GM12878 (cell line): ENCODE measurements at regions of chr12 and their contacts with region 1.

Region 1: DNA sequence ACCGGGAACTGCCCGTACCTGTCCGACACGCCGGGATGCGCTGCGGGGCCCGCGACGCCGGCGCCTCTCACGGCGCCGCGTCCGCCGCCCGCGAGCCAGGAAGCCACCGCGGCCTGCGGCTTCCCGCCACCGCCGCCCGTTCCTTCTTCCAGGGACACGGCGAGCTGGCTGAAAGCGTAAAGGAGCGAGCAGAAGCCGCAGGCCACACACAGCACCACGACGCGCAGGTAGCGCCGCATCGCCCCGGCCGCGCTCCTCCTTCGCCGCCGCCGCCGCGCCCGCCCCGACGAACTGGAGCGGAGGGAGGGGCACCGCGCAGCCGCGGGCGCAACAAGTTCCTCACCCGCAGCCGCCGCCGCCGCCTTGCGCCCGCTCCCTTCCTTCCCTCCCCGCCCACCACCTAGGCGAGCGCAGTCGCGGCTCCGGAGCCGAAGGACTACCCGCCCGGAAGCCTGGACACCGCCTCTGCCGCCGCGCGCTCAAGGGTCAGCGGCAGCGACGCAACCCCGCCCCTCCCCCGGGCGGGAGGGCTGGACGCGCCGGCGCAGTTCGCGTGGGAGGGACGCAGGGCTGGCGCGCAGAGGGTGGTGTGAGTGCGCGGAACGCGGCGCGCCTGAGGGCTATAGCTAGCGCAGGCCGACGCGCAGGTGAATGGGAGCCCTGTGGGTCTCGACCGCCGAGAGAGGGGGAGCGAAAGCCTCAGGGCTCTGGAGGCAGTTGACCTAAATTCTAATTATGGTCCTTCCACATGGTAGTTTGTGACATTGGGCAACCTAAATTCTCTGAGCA is at the start of gene GXYLT1:
- DNase-seq: peak; percentile 79
- ATAC-seq: peak; percentile 94
- H3K4me3 ChIP-seq: peak within 1 kb of the TSS; percentile 82
- H3K27ac ChIP-seq: peak within 1 kb of the TSS; percentile 61
- H3K4me1 ChIP-seq: peaks cover 5% of the 10 kb centered on the region; the same call in 1 of the 2 replicates
- H3K27me3 ChIP-seq: no peaks in the 10 kb centered on the region
- CTCF ChIP-seq: no peak
- EP300 ChIP-seq: no peak; a peak in 1 of 4 replicates
- POLR2A ChIP-seq: peak; percentile 86
- RAD21 ChIP-seq: no peak
- polyA plus RNA-seq, gene GXYLT1: 2.3 to 2.4 TPM

Region 2: DNA sequence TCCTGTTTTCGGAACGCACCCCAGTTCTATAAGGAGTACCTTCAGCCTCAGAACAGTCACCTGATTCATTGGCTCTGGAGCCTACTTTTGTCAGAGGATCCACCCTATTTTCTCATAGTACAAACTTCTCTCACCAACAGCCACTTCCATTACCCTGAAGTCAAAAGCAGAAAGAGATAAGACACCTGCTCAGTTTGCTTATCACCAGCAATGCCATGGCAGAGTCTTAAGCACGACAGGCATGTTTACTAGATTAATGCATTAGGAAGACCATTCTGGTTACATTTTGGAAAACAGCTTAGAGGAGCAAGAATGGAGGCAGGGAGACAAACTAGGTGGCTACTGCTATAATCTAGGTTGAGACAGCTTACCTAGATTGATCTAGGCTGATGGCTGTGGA is 67.6 kb before region 1 on chr12:
- CTCF ChIA-PET with region 1: no interaction called
- POLR2A ChIA-PET with region 1: no interaction called
- RAD21 ChIA-PET with region 1: no interaction called
- SMC1A ChIA-PET with region 1: no interaction called
- in situ Hi-C with region 1: no loop called
- intact Hi-C with region 1: no loop called
- DNase-seq: no peak
- ATAC-seq: no peak
- H3K4me3 ChIP-seq: no peak overlapping the region
- H3K27ac ChIP-seq: no peak overlapping the region
- H3K4me1 ChIP-seq: no peaks in the 10 kb centered on the region
- H3K27me3 ChIP-seq: no peaks in the 10 kb centered on the region
- CTCF ChIP-seq: no peak
- EP300 ChIP-seq: no peak
- POLR2A ChIP-seq: no peak
- RAD21 ChIP-seq: no peak

Region 3: DNA sequence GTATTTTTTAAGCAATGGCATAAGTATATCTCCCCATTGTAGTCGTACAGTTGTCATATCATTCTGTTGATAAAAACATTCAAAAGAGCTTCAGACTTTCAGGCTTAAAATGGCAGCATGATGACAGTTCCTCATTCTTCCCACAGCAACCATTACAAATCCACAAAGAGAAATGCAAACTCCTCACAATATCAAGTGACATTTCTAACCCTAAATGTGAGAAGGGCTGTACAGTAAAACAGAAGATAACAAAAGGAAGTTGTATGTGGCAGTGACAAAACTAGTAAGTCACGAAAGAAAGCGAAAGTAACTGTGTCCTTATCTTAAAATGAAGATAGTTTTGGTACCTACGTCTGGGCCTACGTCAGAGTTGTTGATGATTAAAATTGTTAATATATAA is 46.6 kb before region 1 on chr12:
- CTCF ChIA-PET with region 1: interaction called, 3 read pairs
- POLR2A ChIA-PET with region 1: no interaction called
- RAD21 ChIA-PET with region 1: no interaction called
- SMC1A ChIA-PET with region 1: interaction called, 5 read pairs
- in situ Hi-C with region 1: no loop called
- intact Hi-C with region 1: loop called (anchors 5 kb)
- DNase-seq: peak; percentile 42
- ATAC-seq: peak; percentile 93
- H3K4me3 ChIP-seq: peak overlapping the region; percentile 39
- H3K27ac ChIP-seq: peak overlapping the region; percentile 72
- H3K4me1 ChIP-seq: no peaks in the 10 kb centered on the region
- H3K27me3 ChIP-seq: no peaks in the 10 kb centered on the region
- CTCF ChIP-seq: no peak
- EP300 ChIP-seq: peak in 1 of 2 experiments; percentile 40; a peak in 1 of 4 replicates
- POLR2A ChIP-seq: no peak
- RAD21 ChIP-seq: no peak

Region 4: DNA sequence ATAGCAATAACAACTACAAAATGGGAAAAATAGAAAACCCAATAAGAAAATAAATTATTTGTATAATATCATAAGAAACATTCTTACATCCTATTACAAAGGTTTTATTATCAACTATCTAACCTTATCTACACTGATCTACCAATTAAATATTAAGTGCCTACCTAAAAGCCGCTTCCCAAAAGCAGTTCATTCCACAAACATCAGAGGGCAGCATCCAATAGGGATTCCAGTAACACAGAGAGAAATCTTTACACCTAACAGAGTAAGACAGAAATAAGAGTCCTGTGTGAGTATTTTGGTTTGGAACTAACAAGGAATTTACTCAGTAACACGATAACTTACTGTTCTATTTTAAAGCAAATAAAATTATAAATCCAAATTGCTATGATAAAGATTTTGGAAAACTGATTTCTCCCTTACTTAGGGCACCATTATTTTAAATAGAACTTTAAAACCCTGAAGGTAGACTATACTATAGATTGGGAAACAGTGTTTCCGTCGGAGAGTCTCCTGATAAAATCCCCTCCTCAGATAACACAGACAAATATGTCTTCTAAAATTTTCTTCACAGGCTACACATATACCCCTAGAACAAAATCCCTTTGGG is 14.9 kb before region 1 on chr12:
- CTCF ChIA-PET with region 1: interaction called, 14 read pairs
- POLR2A ChIA-PET with region 1: interaction called, 4 read pairs
- RAD21 ChIA-PET with region 1: interaction called, 9 read pairs
- SMC1A ChIA-PET with region 1: interaction called, 11 read pairs
- in situ Hi-C with region 1: no loop called
- intact Hi-C with region 1: no loop called
- DNase-seq: no peak
- ATAC-seq: peak; percentile 32; the same call in 2 of the 3 replicates
- H3K4me3 ChIP-seq: no peak overlapping the region
- H3K27ac ChIP-seq: no peak overlapping the region
- H3K4me1 ChIP-seq: no peaks in the 10 kb centered on the region
- H3K27me3 ChIP-seq: no peaks in the 10 kb centered on the region
- CTCF ChIP-seq: peak; percentile 36 to 69 (median 47); a peak in 5 of 6 replicates
- EP300 ChIP-seq: no peak
- POLR2A ChIP-seq: no peak
- RAD21 ChIP-seq: peak; percentile 92

Region 5: DNA sequence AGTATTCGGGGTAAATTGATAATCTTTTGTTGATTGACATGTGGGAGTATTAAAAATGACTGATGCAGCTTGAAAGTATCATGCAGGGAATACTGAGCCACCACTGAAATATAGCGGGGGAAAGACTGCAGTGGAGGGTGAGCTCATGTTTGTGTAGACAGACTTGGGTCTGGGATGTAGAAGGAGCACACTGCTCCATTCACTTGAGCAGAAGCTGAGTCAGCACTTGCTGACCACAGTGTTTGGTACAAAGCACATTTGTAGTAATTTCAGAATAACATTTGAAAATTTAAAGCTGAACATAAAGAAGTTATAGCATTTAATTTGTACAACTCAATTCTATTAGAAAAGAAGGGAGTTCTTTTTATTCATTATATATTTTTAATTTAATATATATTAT is 749.2 kb after region 1 on chr12:
- CTCF ChIA-PET with region 1: no interaction called
- POLR2A ChIA-PET with region 1: no interaction called
- RAD21 ChIA-PET with region 1: no interaction called
- SMC1A ChIA-PET with region 1: no interaction called
- in situ Hi-C with region 1: no loop called
- intact Hi-C with region 1: no loop called
- DNase-seq: no peak
- ATAC-seq: no peak
- H3K4me3 ChIP-seq: no peak overlapping the region
- H3K27ac ChIP-seq: no peak overlapping the region
- H3K4me1 ChIP-seq: no peaks in the 10 kb centered on the region
- H3K27me3 ChIP-seq: no peaks in the 10 kb centered on the region
- CTCF ChIP-seq: no peak
- EP300 ChIP-seq: no peak
- POLR2A ChIP-seq: no peak
- RAD21 ChIP-seq: no peak